Calu3 (cell line): ENCODE measurements at regions of chr4 and their contacts with region 1.

Region 1: GRCh38 chr4:48343551-48343950 is 2.2 kb downstream of the SLAIN2 start:
- DNase-seq: no peak
- H3K4me3 Mint-ChIP-seq: peak overlapping the region; percentile 85
- H3K27ac Mint-ChIP-seq: no peak overlapping the region
- H3K4me1 Mint-ChIP-seq: peaks cover 12% of the 10 kb centered on the region
- H3K27me3 Mint-ChIP-seq: no peaks in the 10 kb centered on the region
- CTCF ChIP-seq: no peak

Region 2: GRCh38 chr4:48375651-48376293 is 32.2 kb after region 1 on chr4:
- CTCF ChIA-PET with region 1: interaction called, 11 read pairs
- intact Hi-C with region 1: no loop called
- DNase-seq: peak; percentile 35
- H3K4me3 Mint-ChIP-seq: peak overlapping the region; percentile 18
- H3K27ac Mint-ChIP-seq: no peak overlapping the region
- H3K4me1 Mint-ChIP-seq: peaks cover 22% of the 10 kb centered on the region
- H3K27me3 Mint-ChIP-seq: no peaks in the 10 kb centered on the region
- CTCF ChIP-seq: no peak